ENCODE measurements at regions of chr19 and their contacts with region 1.

Region 1: DNA sequence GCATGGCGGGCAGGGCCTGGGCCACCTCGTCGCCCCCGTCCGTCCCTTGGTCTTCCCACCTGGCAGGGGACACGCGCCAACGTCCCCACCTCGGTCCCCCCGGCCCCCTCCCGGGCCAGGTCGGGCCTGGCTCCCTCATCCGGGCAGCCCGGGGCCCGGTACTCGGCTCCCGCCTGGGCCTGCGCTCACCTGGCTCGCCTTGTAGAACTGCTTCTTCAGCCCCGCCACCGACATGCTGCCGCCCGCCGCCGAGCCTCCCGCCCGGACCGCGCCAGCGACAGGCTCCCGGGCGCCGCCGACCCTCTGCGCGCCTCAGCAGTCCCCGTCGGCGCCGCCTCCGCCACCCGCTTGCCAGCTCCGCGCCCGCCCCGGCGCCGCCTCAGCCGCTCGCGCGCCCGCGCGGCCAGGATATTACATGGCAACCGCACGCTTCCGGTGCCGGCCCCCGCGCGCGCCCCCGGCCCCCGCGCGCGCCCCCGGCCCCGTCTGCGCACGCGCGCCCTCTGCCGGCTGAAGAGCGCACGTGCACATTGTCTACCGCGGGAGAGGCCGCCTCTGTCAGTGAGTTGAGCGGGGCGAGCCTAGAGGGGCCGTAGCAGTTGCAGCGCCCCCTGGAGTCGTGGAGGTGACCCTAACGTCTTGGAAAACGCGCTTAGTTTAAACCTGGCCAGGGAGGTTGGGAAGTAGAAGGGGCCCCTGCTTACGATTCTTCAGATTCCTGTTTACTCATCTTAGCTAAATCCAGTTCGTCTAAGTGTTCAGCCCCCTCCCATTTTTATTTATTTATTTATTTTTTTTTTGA is at the start of gene SH3GL1:
- DNase-seq: peak; percentile 91
- ATAC-seq: peak; percentile 55 to 82 (median 68)
- H3K4me3 ChIP-seq: peak within 1 kb of the TSS; percentile 57 to 99 (median 96)
- H3K27ac ChIP-seq: peak within 1 kb of the TSS; percentile 88 to 99 (median 96)
- H3K4me1 ChIP-seq: peaks cover 19 to 68% (median 55%) of the 10 kb centered on the region in 9 donors
- H3K27me3 ChIP-seq: no peaks in the 10 kb centered on the region
- CTCF ChIP-seq: peak; percentile 86 to 98 (median 94)
- total RNA-seq, gene SH3GL1: 13.1 to 33.4 (median 17.6) TPM

Region 2: DNA sequence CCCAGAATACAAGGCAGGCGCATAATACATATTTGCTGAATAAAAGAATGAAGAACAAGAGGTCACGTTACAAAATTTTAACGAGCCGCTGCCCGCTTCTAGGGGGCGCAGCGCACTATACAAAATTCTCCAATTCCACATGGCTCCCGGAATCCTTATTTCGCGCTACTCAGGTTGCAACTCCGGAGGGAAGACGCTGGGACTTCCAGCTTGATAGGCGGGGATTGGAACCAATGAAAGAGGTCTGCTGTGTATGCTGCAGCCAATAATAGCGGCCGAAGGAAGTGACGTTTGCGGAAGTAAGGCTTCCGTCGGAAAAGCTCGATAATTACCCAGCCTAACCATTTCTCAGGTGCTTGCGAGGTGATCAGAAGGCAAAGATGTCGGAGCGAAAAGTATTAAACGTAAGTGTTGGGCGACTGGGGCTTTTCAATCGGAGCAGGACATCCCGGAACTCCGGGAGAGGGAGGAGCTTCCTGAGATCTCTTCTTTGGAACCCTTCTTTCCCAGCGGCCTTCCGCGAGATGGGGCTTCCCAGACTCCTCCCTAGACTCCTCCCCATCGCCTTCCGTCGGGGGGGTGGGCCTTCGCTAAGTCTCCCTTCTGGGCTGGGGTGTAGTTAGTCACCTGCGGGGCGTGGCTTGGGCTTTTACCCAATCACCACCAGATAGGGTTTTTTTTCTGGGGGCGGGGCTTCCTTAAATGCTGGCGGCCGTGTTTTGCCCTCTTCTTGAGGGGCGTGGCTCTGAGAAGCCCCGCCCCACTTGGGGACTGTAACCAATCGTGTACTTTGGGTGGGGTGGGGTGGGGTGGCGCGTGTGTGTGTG is 153.4 kb before region 1 on chr19 and contains the start of gene YJU2:
- intact Hi-C with region 1: loop called in 4 of 10 experiments (anchors 1 to 5 kb)
- DNase-seq: peak; percentile 98 to 99
- ATAC-seq: peak; percentile 98 to 99 (median 99)
- H3K4me3 ChIP-seq: peak within 1 kb of the TSS; percentile 52 to 78 (median 64)
- H3K27ac ChIP-seq: peak within 1 kb of the TSS; percentile 78 to 99 (median 94)
- H3K4me1 ChIP-seq: peaks cover 0 to 14% (median 11%) of the 10 kb centered on the region in 9 donors
- H3K27me3 ChIP-seq: no peaks in the 10 kb centered on the region
- CTCF ChIP-seq: peak in 7 of 9 donors; percentile 20 to 65 (median 54)
- total RNA-seq, gene YJU2: 7.9 to 11.9 (median 10.4) TPM

Region 3: GRCh38 chr19:4328243-4328990 is 71.9 kb before region 1 on chr19:
- intact Hi-C with region 1: loop called in 1 of 10 experiments (anchors 5 kb)
- DNase-seq: peak; percentile 89 to 98
- ATAC-seq: peak; percentile 94 to 96 (median 96)
- H3K4me3 ChIP-seq: peak overlapping the region; percentile 10 to 59 (median 47)
- H3K27ac ChIP-seq: peak overlapping the region in 1 of 10 donors; percentile 42
- H3K4me1 ChIP-seq: peaks cover 0 to 24% (median 21%) of the 10 kb centered on the region in 9 donors
- H3K27me3 ChIP-seq: peaks cover 0 to 16% (median 0%) of the 10 kb centered on the region in 7 donors
- CTCF ChIP-seq: no peak

Region 4: DNA sequence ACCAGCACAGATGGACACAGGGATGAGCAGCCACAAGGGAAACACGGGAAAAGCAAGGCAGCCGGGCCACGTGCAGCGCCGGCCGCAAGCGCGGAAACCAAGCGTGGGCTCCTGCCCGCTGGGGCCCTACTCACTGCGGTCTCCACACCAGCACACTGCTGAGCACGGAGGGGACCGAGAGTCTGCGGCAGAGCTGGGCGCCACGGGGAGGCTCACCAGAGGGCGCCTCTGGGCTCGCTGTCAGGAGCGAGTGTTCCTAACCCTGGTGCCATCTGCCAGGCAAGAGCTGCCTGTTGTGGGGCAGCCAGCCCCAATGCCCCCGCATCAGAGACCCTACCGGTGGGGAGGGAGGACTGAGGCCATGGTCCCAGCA is 30.5 kb before region 1 on chr19:
- intact Hi-C with region 1: loop called in 3 of 10 experiments (anchors 1 to 2 kb)
- DNase-seq: peak in 1 of 2 donors; percentile 57
- ATAC-seq: peak in 7 of 8 donors; percentile 20 to 52 (median 43)
- H3K4me3 ChIP-seq: peak overlapping the region in 9 of 10 donors; percentile 15 to 43 (median 36)
- H3K27ac ChIP-seq: peak overlapping the region; percentile 53 to 93 (median 80)
- H3K4me1 ChIP-seq: peaks cover 48 to 82% (median 76%) of the 10 kb centered on the region in 9 donors
- H3K27me3 ChIP-seq: no peaks in the 10 kb centered on the region
- CTCF ChIP-seq: peak in 7 of 9 donors; percentile 39 to 70 (median 55)

Region 5: GRCh38 chr19:4457654-4458395 is 57.5 kb after region 1 on chr19 and contains the start of gene UBXN6:
- intact Hi-C with region 1: loop called in 2 of 10 experiments (anchors 5 kb)
- DNase-seq: peak; percentile 97 to 98
- ATAC-seq: peak; percentile 88 to 94 (median 91)
- H3K4me3 ChIP-seq: peak within 1 kb of the TSS; percentile 51 to 88 (median 76)
- H3K27ac ChIP-seq: peak within 1 kb of the TSS; percentile 66 to 96 (median 91)
- H3K4me1 ChIP-seq: peaks cover 7 to 43% (median 25%) of the 10 kb centered on the region in 9 donors
- H3K27me3 ChIP-seq: no peaks in the 10 kb centered on the region
- CTCF ChIP-seq: peak in 1 of 9 donors; percentile 8
- total RNA-seq, gene UBXN6: 90.6 to 123 (median 104) TPM

Measured in heart right ventricle (tissue), 16 donors.